ENCODE measurements at regions of chr9 and their contacts with region 1.

Region 1: DNA sequence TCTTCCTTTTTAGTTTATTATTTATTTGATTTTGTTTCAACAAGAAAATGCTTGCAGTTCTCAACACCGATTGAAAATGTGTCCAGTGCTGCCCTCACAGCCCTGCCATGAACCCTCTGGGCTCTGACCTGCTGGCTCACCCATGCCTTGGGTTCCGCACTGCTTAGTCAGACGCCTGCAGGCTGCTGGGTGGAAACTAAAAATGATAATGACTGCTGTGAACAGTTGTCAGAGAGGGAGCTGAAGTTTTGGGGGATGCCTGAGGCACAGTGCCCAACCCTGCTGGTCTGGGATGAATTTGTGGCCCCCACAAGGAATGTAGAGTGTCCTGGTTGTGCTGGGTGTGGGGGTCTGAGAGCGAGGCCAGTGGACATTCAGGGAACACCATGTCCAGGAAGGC is 22.2 kb upstream of the CFAP157 start:
- DNase-seq: no peak
- ATAC-seq: no peak
- H3K4me3 ChIP-seq: no peak overlapping the region
- H3K27ac ChIP-seq: no peak overlapping the region
- H3K4me1 ChIP-seq: peaks cover 10% of the 10 kb centered on the region
- H3K27me3 ChIP-seq: no peaks in the 10 kb centered on the region
- CTCF ChIP-seq: no peak

Region 2: GRCh38 chr9:127555768-127556397 is 128.7 kb before region 1 on chr9:
- intact Hi-C with region 1: no loop called
- DNase-seq: peak; percentile 73 to 82
- ATAC-seq: peak in 3 of 4 donors; percentile 46 to 62 (median 54)
- H3K4me3 ChIP-seq: no peak overlapping the region
- H3K27ac ChIP-seq: peak overlapping the region; percentile 1
- H3K4me1 ChIP-seq: peaks cover 29% of the 10 kb centered on the region
- H3K27me3 ChIP-seq: no peaks in the 10 kb centered on the region
- CTCF ChIP-seq: no peak

Region 3: GRCh38 chr9:127698985-127699670 is 14.6 kb after region 1 on chr9:
- intact Hi-C with region 1: loop called in 1 of 2 experiments (anchors 2 kb)
- DNase-seq: peak; percentile 98 to 99
- ATAC-seq: peak; percentile 98 to 99 (median 98)
- H3K4me3 ChIP-seq: peak overlapping the region; percentile 50
- H3K27ac ChIP-seq: peak overlapping the region; percentile 88
- H3K4me1 ChIP-seq: peaks cover 19% of the 10 kb centered on the region
- H3K27me3 ChIP-seq: no peaks in the 10 kb centered on the region
- CTCF ChIP-seq: peak; percentile 26

Measured in psoas muscle (tissue), 8 donors.